ENCODE measurements at regions of chr17 and their contacts with region 1.

Region 1: DNA sequence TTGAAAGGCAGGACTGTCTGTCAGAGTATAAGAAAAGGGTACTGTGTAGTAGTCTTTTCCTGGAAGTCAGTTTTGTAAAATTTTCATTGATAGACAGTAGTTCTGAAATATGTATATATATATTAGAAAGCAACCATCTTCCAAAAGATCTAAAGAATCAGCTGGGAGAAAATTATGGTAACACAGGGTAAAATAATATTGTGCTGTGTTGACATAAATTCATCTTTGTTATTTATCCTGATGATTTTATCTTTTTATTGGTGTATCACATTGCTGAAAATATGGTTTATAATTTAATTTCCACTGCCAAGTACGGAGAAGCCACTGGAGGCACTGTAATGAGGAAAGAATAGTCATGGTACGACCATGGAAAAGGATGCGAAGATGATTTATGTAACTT is 324.9 kb downstream of the CA10 start:
- DNase-seq: no peak
- ATAC-seq: no peak
- H3K4me3 ChIP-seq: no peak overlapping the region
- H3K4me3 Mint-ChIP-seq: no peak overlapping the region
- H3K27ac ChIP-seq: no peak overlapping the region
- H3K27ac Mint-ChIP-seq: no peak overlapping the region
- H3K4me1 ChIP-seq: no peaks in the 10 kb centered on the region
- H3K4me1 Mint-ChIP-seq: no peaks in the 10 kb centered on the region
- H3K27me3 ChIP-seq: no peaks in the 10 kb centered on the region
- H3K27me3 Mint-ChIP-seq: peaks cover 0 to 6% of the 10 kb centered on the region in 2 donors
- CTCF ChIP-seq: no peak

Region 2: GRCh38 chr17:51770031-51770759 is 63.4 kb before region 1 on chr17:
- intact Hi-C with region 1: loop called (anchors 10 kb)
- DNase-seq: no peak
- ATAC-seq: no peak
- H3K4me3 ChIP-seq: no peak overlapping the region
- H3K4me3 Mint-ChIP-seq: no peak overlapping the region
- H3K27ac ChIP-seq: no peak overlapping the region
- H3K27ac Mint-ChIP-seq: no peak overlapping the region
- H3K4me1 ChIP-seq: no peaks in the 10 kb centered on the region
- H3K4me1 Mint-ChIP-seq: no peaks in the 10 kb centered on the region
- H3K27me3 ChIP-seq: no peaks in the 10 kb centered on the region
- H3K27me3 Mint-ChIP-seq: peaks cover 3 to 24% of the 10 kb centered on the region in 2 donors
- CTCF ChIP-seq: no peak

Measured in natural killer cell (primary cell).